ENCODE measurements at regions of chr5 and their contacts with region 1.

Region 1: GRCh38 chr5:29972597-29972996 is 1220.9 kb upstream of the CDH6 start:
- DNase-seq: no peak
- ATAC-seq: no peak
- H3K4me3 ChIP-seq: no peak overlapping the region
- H3K4me3 Mint-ChIP-seq: no peak overlapping the region
- H3K27ac ChIP-seq: no peak overlapping the region
- H3K27ac Mint-ChIP-seq: no peak overlapping the region
- H3K4me1 ChIP-seq: no peaks in the 10 kb centered on the region
- H3K4me1 Mint-ChIP-seq: no peaks in the 10 kb centered on the region
- H3K27me3 ChIP-seq: no peaks in the 10 kb centered on the region
- H3K27me3 Mint-ChIP-seq: no peaks in the 10 kb centered on the region
- CTCF ChIP-seq: no peak

Region 2: DNA sequence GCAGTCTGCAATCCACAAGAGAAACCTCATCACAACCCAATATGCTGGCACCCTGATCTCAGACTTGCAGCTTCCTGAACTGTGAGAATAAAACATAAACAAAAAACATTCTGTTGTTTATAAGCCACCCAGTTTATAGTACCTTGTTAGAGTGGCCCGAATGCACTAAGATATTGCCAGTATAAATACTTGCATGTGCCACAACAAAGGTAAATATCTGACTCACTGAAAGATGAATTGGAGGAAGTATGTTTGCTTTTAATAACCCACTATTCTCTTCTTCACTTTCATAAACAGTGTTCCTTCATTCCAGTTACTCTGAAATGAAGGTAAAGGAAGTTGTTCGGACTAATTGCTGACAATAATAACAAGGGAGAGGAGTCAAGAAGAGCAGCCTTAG is 57.5 kb after region 1 on chr5:
- CTCF ChIA-PET with region 1: no interaction called
- POLR2A ChIA-PET with region 1: no interaction called
- intact Hi-C with region 1: loop called in 1 of 2 experiments (anchors 10 kb)
- DNase-seq: no peak
- ATAC-seq: no peak
- H3K4me3 ChIP-seq: no peak overlapping the region
- H3K4me3 Mint-ChIP-seq: no peak overlapping the region
- H3K27ac ChIP-seq: no peak overlapping the region
- H3K27ac Mint-ChIP-seq: no peak overlapping the region
- H3K4me1 ChIP-seq: no peaks in the 10 kb centered on the region
- H3K4me1 Mint-ChIP-seq: no peaks in the 10 kb centered on the region
- H3K27me3 ChIP-seq: no peaks in the 10 kb centered on the region
- H3K27me3 Mint-ChIP-seq: no peaks in the 10 kb centered on the region
- CTCF ChIP-seq: no peak